ENCODE measurements at regions of chr22 and their contacts with region 1.

Region 1: DNA sequence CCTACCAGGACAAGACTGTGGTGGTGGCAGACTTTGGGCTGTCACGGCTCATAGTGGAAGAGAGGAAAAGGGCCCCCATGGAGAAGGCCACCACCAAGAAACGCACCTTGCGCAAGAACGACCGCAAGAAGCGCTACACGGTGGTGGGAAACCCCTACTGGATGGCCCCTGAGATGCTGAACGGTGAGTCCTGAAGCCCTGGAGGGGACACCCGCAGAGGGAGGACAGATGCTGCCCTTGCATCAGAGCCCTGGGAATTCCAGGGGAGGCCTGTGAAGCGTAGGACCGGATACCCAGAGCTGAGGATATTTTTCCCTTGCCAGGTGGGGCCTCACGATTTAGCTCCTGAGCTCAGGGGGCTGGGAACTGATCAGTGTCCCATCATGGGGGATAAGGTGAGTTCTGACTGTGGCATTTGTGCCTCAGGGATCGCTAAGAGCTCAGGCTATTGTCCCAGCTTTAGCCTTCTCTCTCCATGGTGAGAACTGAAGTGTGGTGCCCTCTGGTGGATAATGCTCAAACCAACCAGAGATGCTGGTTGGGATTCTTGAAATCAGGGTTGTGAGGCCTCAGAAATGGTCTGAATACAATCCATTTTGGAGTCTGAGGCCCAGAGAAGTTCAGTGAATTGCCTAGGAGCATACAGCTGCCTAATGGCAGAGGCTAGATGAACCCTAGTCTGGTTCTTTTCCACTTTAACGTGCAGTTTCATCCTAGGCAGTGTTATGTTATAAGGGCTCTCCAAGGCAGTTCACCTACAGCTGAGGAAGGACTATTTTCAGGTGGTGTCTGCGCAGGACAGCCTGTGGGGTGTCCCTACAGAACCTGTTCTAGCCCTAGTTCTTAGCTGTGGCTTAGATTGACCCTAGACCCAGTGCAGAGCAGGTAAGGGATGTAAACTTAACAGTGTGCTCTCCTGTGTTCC is 19.5 kb downstream of the PIK3IP1 start:
- DNase-seq: peak; percentile 87
- H3K4me3 Mint-ChIP-seq: no peak overlapping the region
- H3K27ac Mint-ChIP-seq: peak overlapping the region; percentile 48
- H3K4me1 Mint-ChIP-seq: peaks cover 14% of the 10 kb centered on the region
- H3K27me3 Mint-ChIP-seq: no peaks in the 10 kb centered on the region

Region 2: DNA sequence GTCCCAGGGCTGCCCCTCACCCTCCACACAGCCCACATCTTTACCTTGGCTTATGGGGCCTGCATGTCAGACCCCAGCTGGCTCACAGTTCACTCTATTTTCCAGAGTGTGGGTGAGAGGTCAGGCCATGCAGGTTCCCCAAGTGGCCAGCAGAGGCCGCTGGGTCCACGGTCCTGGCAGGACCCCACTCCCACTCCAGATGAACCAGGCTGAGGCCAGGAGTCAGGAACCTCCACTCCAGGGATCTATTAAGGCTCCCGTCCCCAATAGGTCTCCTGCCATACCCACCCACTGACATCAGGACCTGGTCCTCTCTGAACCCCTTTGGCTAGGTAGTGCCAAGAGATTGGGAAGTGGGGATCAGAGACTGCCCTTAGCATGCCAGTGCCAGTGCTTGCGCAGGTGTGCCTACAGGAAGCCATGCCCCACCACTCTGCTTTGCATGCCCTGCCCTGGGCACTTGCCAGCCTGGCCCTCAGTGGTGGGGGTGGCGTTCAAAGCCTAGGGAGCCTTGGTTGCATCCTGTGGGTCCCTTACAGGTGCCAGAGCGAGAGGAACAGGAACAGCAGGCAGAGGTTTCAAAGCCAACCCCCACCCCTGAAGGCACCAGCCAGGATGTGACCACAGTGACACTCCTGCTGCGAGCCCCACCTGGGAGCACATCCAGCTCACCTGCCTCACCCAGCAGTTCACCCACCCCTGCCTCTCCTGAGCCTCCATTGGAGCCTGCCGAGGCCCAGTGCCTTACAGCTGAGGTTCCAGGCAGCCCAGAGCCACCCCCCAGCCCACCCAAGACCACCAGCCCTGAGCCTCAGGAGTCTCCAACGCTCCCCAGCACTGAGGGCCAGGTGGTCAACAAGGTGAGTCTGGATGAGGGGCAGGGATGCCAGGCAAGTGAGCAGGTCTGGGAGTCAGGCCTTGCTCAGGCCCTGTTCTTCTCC is 183.4 kb before region 1 on chr22:
- intact Hi-C with region 1: loop called (anchors 2 kb)
- DNase-seq: peak; percentile 81
- H3K4me3 Mint-ChIP-seq: no peak overlapping the region
- H3K27ac Mint-ChIP-seq: no peak overlapping the region
- H3K4me1 Mint-ChIP-seq: peaks cover 3% of the 10 kb centered on the region
- H3K27me3 Mint-ChIP-seq: no peaks in the 10 kb centered on the region

Region 3: GRCh38 chr22:31313366-31314147 is 40.8 kb after region 1 on chr22:
- intact Hi-C with region 1: loop called (anchors 5 kb)
- DNase-seq: peak; percentile 89
- H3K4me3 Mint-ChIP-seq: no peak overlapping the region
- H3K27ac Mint-ChIP-seq: no peak overlapping the region
- H3K4me1 Mint-ChIP-seq: peaks cover 7% of the 10 kb centered on the region
- H3K27me3 Mint-ChIP-seq: no peaks in the 10 kb centered on the region

Region 4: GRCh38 chr22:31378123-31378522 is 105.3 kb after region 1 on chr22:
- intact Hi-C with region 1: no loop called
- DNase-seq: no peak
- H3K4me3 Mint-ChIP-seq: no peak overlapping the region
- H3K27ac Mint-ChIP-seq: no peak overlapping the region
- H3K4me1 Mint-ChIP-seq: peaks cover 7% of the 10 kb centered on the region
- H3K27me3 Mint-ChIP-seq: peaks cover 2% of the 10 kb centered on the region